ENCODE measurements at regions of chr1 and their contacts with region 1.

Region 1: GRCh38 chr1:20493839-20494608 is 8.0 kb upstream of the CAMK2N1 start:
- DNase-seq: peak; percentile 79
- ATAC-seq: peak; percentile 74
- H3K4me3 ChIP-seq: peak overlapping the region in 2 of 3 experiments; percentile 34 to 49; a peak in 3 of 6 replicates
- H3K27ac ChIP-seq: no peak overlapping the region
- H3K4me1 ChIP-seq: peaks cover 57% of the 10 kb centered on the region
- H3K27me3 ChIP-seq: peaks cover 0 to 10% of the 10 kb centered on the region in 2 experiments; a peak in 4 of 5 replicates
- CTCF ChIP-seq: peak; percentile 99
- EP300 ChIP-seq: no peak
- POLR2A ChIP-seq: no peak
- RAD21 ChIP-seq: peak; percentile 98

Region 2: DNA sequence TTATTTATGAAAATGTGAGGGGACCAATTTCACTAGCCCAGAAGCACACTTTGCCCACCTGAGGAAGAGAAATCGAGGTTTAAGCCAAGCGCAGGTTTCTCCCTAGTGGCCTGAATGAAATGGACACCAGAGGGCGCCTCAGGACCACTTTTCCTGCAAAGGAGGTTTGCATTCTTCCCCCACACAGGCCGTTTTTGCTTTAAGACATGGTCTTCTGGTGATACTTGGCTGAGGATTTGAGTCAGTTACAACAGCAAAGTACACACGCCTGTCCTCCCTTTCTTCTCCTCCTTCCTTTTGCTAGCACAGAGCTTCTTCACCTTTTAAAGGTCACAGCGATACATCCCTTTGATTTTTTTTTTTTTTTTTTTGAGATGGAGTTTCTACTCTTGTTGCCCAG is 576.0 kb before region 1 on chr1:
- CTCF ChIA-PET with region 1: interaction called, 3 read pairs
- POLR2A ChIA-PET with region 1: no interaction called
- in situ Hi-C with region 1: no loop called
- intact Hi-C with region 1: loop called (anchors 5 kb)
- DNase-seq: peak; percentile 74
- ATAC-seq: peak; percentile 67
- H3K4me3 ChIP-seq: no peak overlapping the region
- H3K27ac ChIP-seq: no peak overlapping the region
- H3K4me1 ChIP-seq: peaks cover 43% of the 10 kb centered on the region
- H3K27me3 ChIP-seq: no peaks in the 10 kb centered on the region
- CTCF ChIP-seq: peak; percentile 93
- EP300 ChIP-seq: no peak
- POLR2A ChIP-seq: no peak
- RAD21 ChIP-seq: peak; percentile 91

Region 3: DNA sequence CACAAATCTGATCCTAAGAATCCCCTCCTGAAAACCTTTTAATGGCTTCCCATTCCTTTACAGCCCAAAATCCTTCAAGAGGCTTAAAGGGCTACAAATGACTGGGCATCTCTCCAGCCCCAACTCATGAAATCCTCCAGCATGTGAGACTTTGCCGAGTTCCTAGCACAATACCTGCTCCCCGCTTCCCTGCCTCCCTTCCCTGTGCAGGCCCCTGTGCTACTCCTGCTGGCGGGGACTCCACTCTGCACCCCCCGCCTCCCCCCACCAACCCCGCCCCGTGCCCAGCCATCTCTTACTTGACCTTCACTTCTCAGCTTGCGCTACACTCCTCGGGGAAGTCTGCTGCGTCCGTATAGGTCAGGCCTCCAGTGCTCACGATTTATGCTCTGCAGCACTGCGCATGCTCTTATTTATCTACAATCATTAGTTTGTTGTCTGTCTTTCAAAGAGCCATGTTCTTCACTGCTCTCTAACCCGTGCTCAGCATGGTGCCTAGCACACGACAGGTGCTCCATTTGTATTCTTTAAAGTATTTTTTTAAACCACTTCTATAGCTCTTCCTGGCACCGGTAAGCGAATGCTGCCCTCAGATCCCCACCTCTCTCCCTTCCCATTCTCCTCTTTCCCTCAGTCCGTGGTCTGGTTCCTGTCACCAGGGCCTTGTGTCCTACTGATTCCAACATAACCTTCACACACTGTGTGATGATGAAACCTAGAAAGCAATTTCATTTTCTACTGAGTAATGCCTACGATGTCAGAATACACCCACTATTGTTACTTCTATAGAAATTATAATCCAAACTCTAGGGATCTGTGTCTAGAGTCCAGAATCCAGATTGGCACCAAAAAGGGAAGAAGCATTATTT is 270.2 kb before region 1 on chr1:
- CTCF ChIA-PET with region 1: no interaction called
- POLR2A ChIA-PET with region 1: no interaction called
- in situ Hi-C with region 1: loop called (anchors 5 kb)
- intact Hi-C with region 1: no loop called
- DNase-seq: no peak
- ATAC-seq: no peak
- H3K4me3 ChIP-seq: no peak overlapping the region
- H3K27ac ChIP-seq: no peak overlapping the region
- H3K4me1 ChIP-seq: no peaks in the 10 kb centered on the region
- H3K27me3 ChIP-seq: peaks cover 4 to 70% of the 10 kb centered on the region in 2 experiments; a peak in 3 of 5 replicates
- CTCF ChIP-seq: no peak
- EP300 ChIP-seq: no peak
- POLR2A ChIP-seq: no peak
- RAD21 ChIP-seq: no peak

Region 4: DNA sequence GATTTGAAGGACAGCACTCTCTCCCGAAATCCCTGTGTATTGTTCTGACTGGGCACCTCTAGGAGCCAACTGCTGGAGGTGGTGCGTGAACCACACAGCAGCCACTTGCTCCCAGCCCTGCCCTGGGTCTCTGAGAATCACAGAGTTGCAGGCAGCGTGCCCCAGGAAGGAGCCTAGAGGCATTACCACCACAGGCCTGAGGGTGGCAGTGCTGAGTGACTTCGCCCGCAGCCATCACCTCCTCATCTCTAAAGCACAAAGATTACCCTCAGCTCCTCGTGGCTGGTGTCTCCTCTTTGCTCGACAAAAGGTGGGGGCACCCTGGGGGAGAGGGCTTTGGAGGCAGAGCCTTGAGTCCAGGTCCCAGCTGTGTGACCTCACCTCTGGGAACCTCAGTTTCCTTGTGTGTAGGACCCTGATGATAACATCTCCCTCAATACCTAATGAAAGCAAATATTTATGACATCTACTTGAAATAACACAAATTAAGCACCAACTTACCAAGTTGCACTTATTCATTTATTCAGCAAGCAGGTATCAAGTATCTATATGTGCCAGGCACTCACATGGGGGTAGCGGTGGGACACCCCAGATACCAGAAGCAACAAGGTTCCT is 117.0 kb before region 1 on chr1:
- CTCF ChIA-PET with region 1: interaction called, 20 read pairs
- POLR2A ChIA-PET with region 1: no interaction called
- in situ Hi-C with region 1: no loop called
- intact Hi-C with region 1: loop called (anchors 1 kb)
- DNase-seq: peak; percentile 10
- ATAC-seq: peak; percentile 89
- H3K4me3 ChIP-seq: no peak overlapping the region
- H3K27ac ChIP-seq: no peak overlapping the region
- H3K4me1 ChIP-seq: no peaks in the 10 kb centered on the region
- H3K27me3 ChIP-seq: peaks cover 0 to 18% of the 10 kb centered on the region in 2 experiments; a peak in 2 of 5 replicates
- CTCF ChIP-seq: peak; percentile 85
- EP300 ChIP-seq: no peak
- POLR2A ChIP-seq: no peak
- RAD21 ChIP-seq: peak; percentile 37

Region 5: DNA sequence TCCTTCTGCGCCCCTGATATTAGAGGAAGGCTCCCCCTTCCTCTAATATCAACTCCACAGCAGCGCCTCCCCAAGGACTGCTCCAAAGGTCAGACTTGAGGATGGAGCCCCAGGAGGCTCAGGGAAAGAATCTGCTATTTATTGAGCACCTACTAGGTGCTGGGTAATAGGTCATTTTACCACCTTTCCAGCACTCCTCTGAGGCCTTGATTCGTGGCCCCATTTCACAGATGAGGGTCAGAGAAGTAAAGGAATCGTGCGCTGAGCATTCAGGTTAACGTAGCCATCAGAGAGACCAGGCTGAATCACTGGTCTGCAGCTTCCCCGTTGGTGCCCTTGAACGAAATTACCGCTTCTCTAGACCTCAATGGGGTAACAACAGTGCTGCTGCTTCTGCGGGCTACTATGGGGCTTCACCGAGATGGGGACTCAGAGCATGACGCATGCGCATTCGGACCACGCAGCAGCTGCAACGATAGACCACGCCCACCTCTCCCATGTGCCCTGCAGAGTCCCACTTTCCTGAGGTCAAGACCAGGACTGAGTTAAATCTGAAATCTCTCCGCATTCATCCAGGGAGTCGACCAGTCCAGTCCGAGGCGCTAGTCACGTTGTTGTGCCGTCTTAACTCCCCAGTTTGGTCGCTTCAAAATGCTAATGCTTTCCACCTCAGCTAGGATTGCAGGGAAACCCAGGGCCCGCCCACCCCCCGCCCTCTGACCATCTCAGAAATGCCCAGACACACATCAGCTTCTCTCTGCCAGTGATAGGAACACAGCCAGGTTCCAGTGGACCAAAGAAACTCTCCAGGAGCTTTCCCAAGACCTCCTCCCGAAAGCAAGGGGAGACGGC is 20.9 kb before region 1 on chr1:
- CTCF ChIA-PET with region 1: interaction called, 73 read pairs
- POLR2A ChIA-PET with region 1: interaction called, 14 read pairs
- in situ Hi-C with region 1: no loop called
- intact Hi-C with region 1: loop called (anchors 1 kb)
- DNase-seq: no peak
- ATAC-seq: no peak
- H3K4me3 ChIP-seq: no peak overlapping the region
- H3K27ac ChIP-seq: no peak overlapping the region
- H3K4me1 ChIP-seq: peaks cover 63% of the 10 kb centered on the region
- H3K27me3 ChIP-seq: peaks cover 2 to 4% of the 10 kb centered on the region in 2 experiments; a peak in 2 of 5 replicates
- CTCF ChIP-seq: no peak
- EP300 ChIP-seq: no peak
- POLR2A ChIP-seq: no peak
- RAD21 ChIP-seq: no peak

Region 6: DNA sequence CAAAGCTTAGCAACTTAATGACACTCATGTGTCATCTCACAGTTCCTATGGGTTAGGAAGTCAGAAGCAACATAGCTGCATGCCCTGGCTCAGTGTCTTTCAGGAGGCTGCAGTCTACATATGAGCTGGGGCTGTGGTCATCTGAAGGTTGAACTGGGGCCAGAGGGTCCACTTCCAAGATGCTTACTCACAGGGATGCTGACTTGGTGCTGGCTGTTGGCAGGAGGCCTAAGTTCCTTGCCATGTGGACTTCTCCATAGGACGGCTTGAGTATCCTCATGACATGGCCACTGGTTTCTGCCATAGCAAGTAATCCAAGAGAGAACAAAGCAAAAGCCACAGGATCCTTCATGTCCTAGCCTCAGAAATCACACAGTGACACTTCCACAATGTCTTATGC is 46.3 kb after region 1 on chr1:
- CTCF ChIA-PET with region 1: no interaction called
- POLR2A ChIA-PET with region 1: no interaction called
- in situ Hi-C with region 1: no loop called
- intact Hi-C with region 1: no loop called
- DNase-seq: no peak
- ATAC-seq: no peak
- H3K4me3 ChIP-seq: no peak overlapping the region
- H3K27ac ChIP-seq: no peak overlapping the region
- H3K4me1 ChIP-seq: peaks cover 17% of the 10 kb centered on the region
- H3K27me3 ChIP-seq: peaks cover 3 to 45% of the 10 kb centered on the region in 2 experiments; a peak in 3 of 5 replicates
- CTCF ChIP-seq: no peak
- EP300 ChIP-seq: no peak
- POLR2A ChIP-seq: no peak
- RAD21 ChIP-seq: no peak

Measured in HepG2 (cell line).